ENCODE measurements at regions of chr16 and their contacts with region 1.

Region 1: DNA sequence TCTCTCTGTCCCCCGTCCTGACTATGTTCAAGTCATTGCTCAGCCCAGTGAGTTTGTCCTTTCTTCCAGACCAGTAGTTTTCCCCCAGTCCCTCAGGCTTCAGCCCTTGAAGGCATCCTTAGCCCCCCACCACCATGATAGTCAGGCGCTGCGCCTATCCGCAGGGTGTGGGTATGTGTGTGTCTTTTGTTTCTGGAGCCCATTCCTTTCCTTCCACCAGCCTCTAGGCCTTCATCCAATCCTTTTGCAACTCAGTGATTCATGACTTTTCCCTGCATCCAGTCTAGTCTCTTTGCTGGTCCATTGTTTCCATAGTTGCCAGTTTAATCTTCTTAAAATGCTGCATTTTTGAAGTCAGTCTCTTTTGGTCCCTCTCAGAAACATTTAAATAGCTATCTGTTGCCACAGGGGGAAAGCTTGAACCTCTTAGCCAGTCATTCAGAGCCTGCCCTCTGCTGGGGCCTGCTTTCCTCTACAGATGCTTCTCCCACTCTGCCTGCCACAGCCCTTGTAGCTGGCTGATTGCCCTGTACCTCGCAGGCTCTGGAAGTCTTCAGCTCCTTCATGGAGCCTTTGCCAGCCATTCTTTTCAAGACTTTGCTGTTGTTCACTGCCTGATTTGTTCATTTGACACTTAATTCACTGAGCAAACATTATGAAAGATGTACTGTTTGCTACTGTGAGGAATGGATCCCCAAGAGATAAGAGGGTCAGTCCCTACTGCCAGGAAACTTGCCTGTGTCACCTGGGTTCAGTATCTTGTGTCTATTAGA is 55.9 kb upstream of the ADCY7 start:
- DNase-seq: peak; percentile 61 to 73
- ATAC-seq: peak; percentile 67 to 81 (median 77)
- H3K4me3 ChIP-seq: no peak overlapping the region
- H3K27ac ChIP-seq: peak overlapping the region; percentile 44
- H3K4me1 ChIP-seq: peaks cover 42% of the 10 kb centered on the region
- H3K27me3 ChIP-seq: no peaks in the 10 kb centered on the region
- CTCF ChIP-seq: peak; percentile 54

Region 2: GRCh38 chr16:50024684-50025536 is 185.5 kb before region 1 on chr16 and contains the start of gene CNEP1R1:
- intact Hi-C with region 1: loop called in 1 of 2 experiments (anchors 2 kb)
- DNase-seq: peak; percentile 94 to 97
- ATAC-seq: peak; percentile 100
- H3K4me3 ChIP-seq: peak within 1 kb of the TSS; percentile 100
- H3K27ac ChIP-seq: peak within 1 kb of the TSS; percentile 85
- H3K4me1 ChIP-seq: peaks cover 10% of the 10 kb centered on the region
- H3K27me3 ChIP-seq: no peaks in the 10 kb centered on the region
- CTCF ChIP-seq: peak; percentile 100
- total RNA-seq, gene CNEP1R1: 10.9 to 15.8 (median 14.8) TPM

Region 3: DNA sequence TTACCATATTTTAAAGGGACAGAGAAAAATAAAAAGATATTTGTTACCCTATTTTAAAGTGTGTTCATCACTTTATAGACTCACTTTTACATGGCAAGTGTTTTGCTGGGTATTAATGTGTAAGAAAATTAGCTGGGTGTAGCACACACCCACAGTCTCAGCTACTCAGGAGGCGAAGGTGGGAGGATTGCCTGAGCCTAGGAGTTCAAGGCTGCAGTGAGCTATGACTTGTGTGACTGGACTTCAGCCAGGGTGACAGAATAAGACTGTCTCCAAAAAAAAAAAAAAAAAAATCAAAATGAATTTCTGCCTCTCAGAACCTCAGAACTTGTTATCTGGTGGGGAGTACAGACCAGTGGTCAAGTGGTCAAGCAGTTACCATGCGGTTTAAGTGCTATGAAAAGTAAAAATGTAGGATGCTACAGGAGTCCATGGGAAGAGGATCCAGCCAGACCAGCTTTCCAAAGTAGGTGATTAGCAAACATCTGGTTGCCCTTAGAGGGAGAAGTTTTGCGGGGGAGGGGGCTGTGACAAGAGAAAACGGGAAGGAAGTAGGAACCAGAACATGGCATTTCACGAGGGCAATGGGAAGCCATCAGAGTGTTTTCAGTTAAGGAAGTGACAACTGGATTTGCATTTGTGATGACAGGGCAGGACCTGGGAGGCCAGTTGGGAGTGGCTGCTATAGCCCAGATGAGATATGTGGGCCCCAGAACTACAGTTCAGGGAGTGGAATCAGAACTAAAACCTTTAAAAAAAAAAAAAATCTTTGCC is 171.5 kb before region 1 on chr16:
- intact Hi-C with region 1: no loop called
- DNase-seq: peak in 1 of 2 donors; percentile 26
- ATAC-seq: peak in 3 of 4 donors; percentile 35 to 43 (median 39)
- H3K4me3 ChIP-seq: no peak overlapping the region
- H3K27ac ChIP-seq: no peak overlapping the region
- H3K4me1 ChIP-seq: peaks cover 3% of the 10 kb centered on the region
- H3K27me3 ChIP-seq: no peaks in the 10 kb centered on the region
- CTCF ChIP-seq: no peak

Region 4: DNA sequence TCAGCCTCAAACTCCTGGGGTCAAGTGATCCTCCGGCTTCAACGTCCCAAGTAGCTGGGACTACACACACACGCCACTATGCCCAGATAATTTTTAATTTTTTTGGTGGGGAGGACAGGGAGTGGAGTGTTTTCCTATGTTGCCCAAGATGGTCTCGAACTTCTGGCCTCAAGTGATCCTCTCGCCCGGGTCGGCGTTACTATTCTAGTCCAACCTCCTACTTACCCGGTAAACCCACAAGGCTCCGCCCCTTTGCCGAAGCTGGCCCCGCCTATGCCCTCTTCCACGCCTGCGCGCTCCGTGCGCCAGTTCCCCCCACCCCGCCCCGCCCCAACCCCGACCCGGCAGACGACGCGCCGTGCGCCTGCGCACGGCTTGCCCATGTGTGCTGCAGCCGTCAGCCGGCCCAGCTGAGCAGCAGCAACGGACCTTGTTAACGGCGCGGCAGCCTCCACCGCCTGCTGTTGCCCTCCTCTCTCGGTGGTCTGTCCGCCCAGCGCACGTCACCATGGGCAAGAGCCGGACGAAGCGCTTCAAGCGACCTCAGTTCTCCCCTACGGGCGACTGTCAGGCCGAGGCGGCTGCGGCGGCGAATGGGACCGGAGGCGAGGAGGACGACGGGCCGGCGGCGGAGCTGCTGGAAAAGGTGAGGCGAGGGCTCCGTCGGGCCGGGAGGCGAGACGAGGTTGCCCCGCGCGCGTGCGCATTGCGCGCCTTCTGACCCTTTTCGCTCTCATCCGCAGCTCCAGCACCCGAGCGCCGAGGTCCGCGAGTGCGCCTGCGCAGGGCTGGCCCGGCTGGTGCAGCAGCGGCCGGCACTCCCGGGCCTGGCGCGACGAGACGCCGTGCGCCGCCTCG is 144.6 kb before region 1 on chr16 and contains the start of gene HEATR3:
- intact Hi-C with region 1: loop called in 1 of 2 experiments (anchors 5 kb)
- DNase-seq: peak; percentile 92 to 97
- ATAC-seq: peak; percentile 95 to 97 (median 96)
- H3K4me3 ChIP-seq: peak within 1 kb of the TSS; percentile 91
- H3K27ac ChIP-seq: peak within 1 kb of the TSS; percentile 94
- H3K4me1 ChIP-seq: peaks cover 22% of the 10 kb centered on the region
- H3K27me3 ChIP-seq: no peaks in the 10 kb centered on the region
- CTCF ChIP-seq: no peak
- total RNA-seq, gene HEATR3: 9.2 to 20.9 (median 13.4) TPM

Region 5: DNA sequence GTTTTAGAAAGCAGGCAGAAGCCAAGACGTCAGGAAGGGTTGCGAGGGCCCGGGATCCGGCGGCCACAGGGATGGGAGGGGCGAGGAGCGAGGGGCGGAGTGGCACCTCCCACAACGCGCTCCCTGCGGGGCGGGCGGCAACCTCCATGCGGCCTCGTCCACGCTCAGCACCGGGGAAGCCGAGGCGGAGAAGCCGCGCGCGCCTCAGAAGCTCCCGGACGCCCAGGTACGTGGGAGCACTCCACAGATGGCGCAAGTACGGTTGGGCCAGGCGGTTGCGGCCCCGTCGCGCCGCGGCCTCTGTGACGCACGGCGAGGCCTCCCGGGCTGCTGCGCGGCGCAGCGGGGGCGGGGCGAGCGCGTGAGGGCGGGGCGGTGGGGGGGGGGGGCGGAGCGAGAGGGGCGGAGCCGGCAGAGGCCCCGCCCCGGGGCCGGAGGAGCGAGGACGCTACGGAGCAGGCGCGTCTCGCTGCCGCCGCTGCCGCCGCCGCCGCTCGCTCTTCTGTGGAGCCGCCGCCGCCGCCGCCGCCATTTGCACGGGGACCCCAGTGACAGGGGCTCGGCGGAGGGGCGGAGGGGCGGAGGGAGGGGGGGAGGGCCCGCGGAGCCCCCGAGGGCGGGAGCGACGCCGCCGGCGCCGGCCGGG is 57.5 kb before region 1 on chr16 and contains the start of gene TENT4B:
- intact Hi-C with region 1: loop called (anchors 5 kb)
- DNase-seq: peak; percentile 89 to 93
- ATAC-seq: peak; percentile 90 to 94 (median 92)
- H3K4me3 ChIP-seq: peak within 1 kb of the TSS; percentile 92
- H3K27ac ChIP-seq: peak within 1 kb of the TSS; percentile 99
- H3K4me1 ChIP-seq: peaks cover 30% of the 10 kb centered on the region
- H3K27me3 ChIP-seq: no peaks in the 10 kb centered on the region
- CTCF ChIP-seq: no peak
- total RNA-seq, gene TENT4B: 6.8 to 8.1 (median 7.1) TPM

Region 6: DNA sequence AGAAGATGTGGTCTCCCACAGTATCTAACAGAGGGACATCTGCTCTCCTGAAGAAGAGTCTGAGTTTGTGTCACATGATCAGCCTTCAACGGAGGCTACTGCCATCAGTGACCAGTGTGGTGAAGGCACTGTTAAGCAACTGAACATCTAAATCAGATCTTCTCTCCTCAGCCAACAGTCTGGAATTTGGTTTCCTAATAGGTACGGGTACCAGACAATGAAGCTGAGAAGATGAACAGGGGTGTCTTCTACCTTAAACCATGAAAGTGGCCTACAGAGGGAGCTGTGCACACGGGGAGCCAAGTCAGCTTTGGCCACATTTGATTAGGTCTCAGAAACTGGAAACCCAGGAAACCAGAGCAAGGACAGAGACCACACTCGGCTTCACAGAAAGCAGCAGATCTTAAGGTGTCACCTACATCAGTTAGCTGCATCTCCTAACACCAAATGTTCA is 116.5 kb after region 1 on chr16:
- intact Hi-C with region 1: loop called in 1 of 2 experiments (anchors 10 kb)
- DNase-seq: peak in 1 of 2 donors; percentile 24
- ATAC-seq: peak; percentile 25 to 54 (median 51)
- H3K4me3 ChIP-seq: no peak overlapping the region
- H3K27ac ChIP-seq: no peak overlapping the region
- H3K4me1 ChIP-seq: peaks cover 8% of the 10 kb centered on the region
- H3K27me3 ChIP-seq: no peaks in the 10 kb centered on the region
- CTCF ChIP-seq: peak; percentile 37

Region 7: DNA sequence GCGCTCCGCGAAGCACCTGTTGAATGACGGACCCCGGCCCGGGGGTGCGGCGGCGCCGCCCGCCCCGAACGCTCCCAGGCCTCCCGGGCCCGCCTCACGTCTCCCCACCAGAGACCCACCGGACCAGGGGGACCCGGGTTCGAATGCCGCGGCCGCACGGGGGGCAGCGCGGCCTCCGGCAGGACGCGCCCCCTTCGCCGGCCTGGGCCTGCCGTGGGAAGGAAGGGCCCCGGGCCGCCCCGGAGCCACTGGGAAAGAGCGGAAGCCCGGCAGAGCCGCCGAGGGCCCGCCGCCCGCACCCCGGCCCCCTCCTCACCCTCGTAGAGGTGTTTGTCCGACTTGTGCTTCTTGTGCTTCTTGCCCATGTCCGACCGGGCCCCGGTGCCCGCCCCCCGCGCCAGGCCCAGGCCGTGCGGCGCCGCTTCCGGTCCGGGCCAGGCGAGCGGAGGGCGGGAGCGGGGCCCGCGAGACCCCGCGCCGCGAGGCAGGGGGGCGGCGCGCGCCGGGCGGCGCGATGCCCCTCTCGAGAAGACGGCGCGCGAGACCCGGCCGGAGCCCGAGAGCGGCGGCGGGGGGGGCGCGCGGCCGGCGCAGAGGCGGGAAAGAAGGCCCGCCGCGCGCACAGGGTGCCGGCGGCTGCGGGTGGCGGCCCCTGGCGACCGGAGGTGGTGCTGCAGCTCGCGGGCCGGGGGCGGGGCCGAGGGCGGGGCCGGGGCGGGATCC is 158.1 kb after region 1 on chr16 and contains the start of gene BRD7:
- intact Hi-C with region 1: loop called (anchors 5 to 10 kb)
- DNase-seq: peak; percentile 69 to 80
- ATAC-seq: peak; percentile 81 to 90 (median 84)
- H3K4me3 ChIP-seq: peak within 1 kb of the TSS; percentile 94
- H3K27ac ChIP-seq: peak within 1 kb of the TSS; percentile 82
- H3K4me1 ChIP-seq: peaks cover 22% of the 10 kb centered on the region
- H3K27me3 ChIP-seq: no peaks in the 10 kb centered on the region
- CTCF ChIP-seq: peak; percentile 77
- total RNA-seq, gene BRD7: 47.5 to 77.1 (median 52.4) TPM

Region 8: DNA sequence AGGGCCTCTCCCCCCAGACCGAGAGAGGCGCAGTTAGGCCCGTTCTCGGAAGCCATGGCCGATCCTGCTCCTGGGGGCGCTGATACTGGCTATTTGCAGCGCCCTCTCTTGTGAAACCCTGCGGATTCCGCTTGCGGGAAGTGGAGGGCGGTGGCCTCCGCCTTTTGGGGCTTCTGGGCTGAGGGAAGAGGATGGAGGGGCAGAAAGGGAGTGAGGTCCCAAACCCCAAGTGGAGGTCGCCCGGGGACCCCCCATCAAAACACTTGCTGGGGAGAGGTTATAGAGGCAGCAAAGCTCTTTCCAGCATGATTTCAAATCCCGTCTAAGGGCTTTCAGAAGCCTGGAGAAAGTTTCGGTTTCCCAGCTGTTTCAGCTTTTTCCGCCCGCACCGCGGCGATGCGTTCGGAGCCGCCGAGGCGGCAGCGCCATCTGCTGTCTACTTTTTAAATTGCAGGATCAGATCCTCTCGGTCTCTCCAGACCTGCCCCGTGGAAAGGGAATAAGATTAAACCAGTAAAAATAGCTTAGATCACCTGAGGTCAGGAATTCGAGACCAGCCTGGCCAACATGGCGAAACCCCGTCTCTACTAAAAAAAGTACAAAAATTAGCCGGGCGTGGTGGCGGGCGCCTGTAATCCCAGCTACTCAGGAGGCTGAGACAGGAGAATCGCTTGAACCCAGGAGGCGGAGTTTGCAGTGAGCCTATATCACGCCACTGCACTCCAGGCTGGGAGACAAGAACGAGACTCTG is 454.9 kb after region 1 on chr16:
- intact Hi-C with region 1: loop called (anchors 2 to 10 kb)
- DNase-seq: peak; percentile 74 to 85
- ATAC-seq: peak; percentile 63 to 88 (median 76)
- H3K4me3 ChIP-seq: peak overlapping the region; percentile 68
- H3K27ac ChIP-seq: peak overlapping the region; percentile 60
- H3K4me1 ChIP-seq: peaks cover 16% of the 10 kb centered on the region
- H3K27me3 ChIP-seq: no peaks in the 10 kb centered on the region
- CTCF ChIP-seq: peak; percentile 88